Naive thymus-derived CD4-positive, alpha-beta T cell (primary cell): ENCODE measurements at regions of chr1 and their contacts with region 1.

Region 1: DNA sequence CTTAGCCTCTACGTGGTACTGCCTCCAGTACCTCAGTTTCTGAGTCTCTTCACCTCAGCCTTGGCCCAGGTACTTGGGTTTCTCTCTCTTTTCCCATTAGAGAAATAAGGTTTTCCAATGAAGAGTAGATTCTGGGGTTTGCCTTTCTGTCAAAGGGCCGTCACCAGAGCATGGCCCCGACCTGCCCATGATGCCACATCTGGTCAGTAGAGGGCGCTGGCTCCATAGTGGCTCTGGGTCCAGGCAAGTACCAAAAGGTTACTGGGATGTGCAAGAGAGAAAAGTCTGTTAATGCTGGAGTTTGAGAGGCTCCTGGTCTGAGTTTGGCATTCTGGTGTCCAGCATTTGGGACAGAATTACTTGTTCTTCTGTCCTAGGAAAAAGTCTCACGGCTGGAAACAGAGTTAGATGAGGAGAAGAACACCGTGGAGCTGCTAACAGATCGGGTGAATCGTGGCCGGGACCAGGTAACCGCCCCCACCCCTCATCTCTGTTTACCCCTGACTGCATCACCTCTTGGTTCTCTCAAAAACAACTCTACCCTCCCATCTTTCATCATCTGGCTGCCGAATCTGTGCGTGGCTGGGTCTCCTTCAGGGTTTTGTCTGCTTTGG is 5.3 kb upstream of the TUFT1 start:
- DNase-seq: peak; percentile 28 to 78 (median 59)
- ATAC-seq: peak; percentile 88
- H3K4me3 ChIP-seq: no peak overlapping the region
- H3K4me3 Mint-ChIP-seq: no peak overlapping the region
- H3K27ac ChIP-seq: no peak overlapping the region
- H3K27ac Mint-ChIP-seq: peak overlapping the region in 1 of 9 donors; percentile 67
- H3K4me1 ChIP-seq: peaks cover 6% of the 10 kb centered on the region in 2 donors
- H3K4me1 Mint-ChIP-seq: peaks cover 0 to 8% (median 3%) of the 10 kb centered on the region in 7 donors
- H3K27me3 ChIP-seq: no peaks in the 10 kb centered on the region
- H3K27me3 Mint-ChIP-seq: peaks cover 0 to 4% (median 0%) of the 10 kb centered on the region in 5 donors

Region 2: GRCh38 chr1:151739590-151740375 is 205.0 kb after region 1 on chr1:
- CTCF ChIA-PET with region 1: interaction called, 3 read pairs
- POLR2A ChIA-PET with region 1: no interaction called
- intact Hi-C with region 1: loop called (anchors 1 kb)
- DNase-seq: no peak
- ATAC-seq: no peak
- H3K4me3 ChIP-seq: no peak overlapping the region
- H3K4me3 Mint-ChIP-seq: no peak overlapping the region
- H3K27ac ChIP-seq: no peak overlapping the region
- H3K27ac Mint-ChIP-seq: no peak overlapping the region
- H3K4me1 ChIP-seq: no peaks in the 10 kb centered on the region
- H3K4me1 Mint-ChIP-seq: peaks cover 0 to 10% (median 0%) of the 10 kb centered on the region in 7 donors
- H3K27me3 ChIP-seq: no peaks in the 10 kb centered on the region
- H3K27me3 Mint-ChIP-seq: peaks cover 0 to 25% (median 0%) of the 10 kb centered on the region in 5 donors